ENCODE measurements at regions of chr16 and their contacts with region 1.

Region 1: GRCh38 chr16:53099318-53100130 is 44.7 kb downstream of the CHD9 start:
- DNase-seq: peak; percentile 67
- H3K4me3 Mint-ChIP-seq: peak overlapping the region; percentile 65
- H3K27ac Mint-ChIP-seq: peak overlapping the region; percentile 86
- H3K4me1 Mint-ChIP-seq: peaks cover 33% of the 10 kb centered on the region
- H3K27me3 Mint-ChIP-seq: no peaks in the 10 kb centered on the region

Region 2: DNA sequence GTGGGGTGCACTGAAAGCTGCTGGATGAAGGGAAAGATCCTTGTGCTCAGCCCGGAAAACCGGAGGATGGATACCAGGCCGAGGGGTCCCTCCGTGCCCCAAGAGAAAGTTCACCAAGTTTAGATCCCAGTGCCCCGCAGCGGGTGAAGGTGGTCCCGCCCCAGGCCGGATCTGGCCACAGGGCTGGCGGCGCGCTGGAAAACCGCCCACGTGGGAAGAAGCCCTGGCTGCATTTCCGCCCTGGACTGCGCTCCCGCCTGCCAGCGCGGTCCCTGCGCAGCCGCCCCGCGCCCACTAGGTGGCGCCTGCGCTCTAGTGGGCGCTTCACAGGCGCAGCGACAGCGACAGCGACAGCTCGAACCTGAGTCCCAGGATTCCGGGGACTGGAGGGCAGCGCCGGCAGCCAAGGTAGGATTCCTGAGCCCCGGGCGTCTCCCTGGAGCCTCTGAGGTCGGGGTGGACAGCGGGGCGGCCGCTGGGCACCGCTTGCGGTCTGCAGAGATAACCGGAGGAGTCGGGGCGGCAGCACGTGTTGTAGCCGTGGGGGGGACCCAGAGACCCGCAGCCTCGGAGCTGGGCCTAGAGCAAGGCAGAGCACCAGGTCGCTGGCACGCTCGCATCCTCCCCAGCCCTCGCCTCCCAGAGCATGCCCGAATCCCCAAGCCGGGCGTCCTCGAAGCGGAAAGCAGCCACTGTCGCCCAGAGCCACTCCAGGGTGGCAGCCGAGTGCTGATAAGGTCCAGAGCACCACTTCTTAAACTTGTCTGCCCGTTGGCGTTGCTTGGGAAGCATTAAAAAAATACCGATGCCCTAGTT is 44.6 kb before region 1 on chr16 and contains the start of gene CHD9:
- CTCF ChIA-PET with region 1: interaction called, 15 read pairs
- POLR2A ChIA-PET with region 1: interaction called, 15 read pairs
- DNase-seq: peak; percentile 79
- H3K4me3 Mint-ChIP-seq: peak within 1 kb of the TSS; percentile 77
- H3K27ac Mint-ChIP-seq: peak within 1 kb of the TSS; percentile 71
- H3K4me1 Mint-ChIP-seq: peaks cover 52% of the 10 kb centered on the region
- H3K27me3 Mint-ChIP-seq: no peaks in the 10 kb centered on the region
- total RNA-seq, gene CHD9: 21.6 to 23.8 TPM

Region 3: GRCh38 chr16:53068423-53068833 is 31.1 kb before region 1 on chr16:
- CTCF ChIA-PET with region 1: interaction called, 3 read pairs
- POLR2A ChIA-PET with region 1: interaction called, 13 read pairs
- DNase-seq: peak; percentile 45
- H3K4me3 Mint-ChIP-seq: peak overlapping the region; percentile 19
- H3K27ac Mint-ChIP-seq: peak overlapping the region; percentile 68
- H3K4me1 Mint-ChIP-seq: peaks cover 57% of the 10 kb centered on the region
- H3K27me3 Mint-ChIP-seq: no peaks in the 10 kb centered on the region

Region 4: GRCh38 chr16:53130159-53131049 is 30.9 kb after region 1 on chr16:
- CTCF ChIA-PET with region 1: interaction called, 4 read pairs
- POLR2A ChIA-PET with region 1: interaction called, 20 read pairs
- DNase-seq: peak; percentile 93
- H3K4me3 Mint-ChIP-seq: peak overlapping the region; percentile 77
- H3K27ac Mint-ChIP-seq: peak overlapping the region; percentile 71
- H3K4me1 Mint-ChIP-seq: peaks cover 21% of the 10 kb centered on the region
- H3K27me3 Mint-ChIP-seq: no peaks in the 10 kb centered on the region

Region 5: GRCh38 chr16:53142823-53143568 is 43.5 kb after region 1 on chr16:
- CTCF ChIA-PET with region 1: no interaction called
- POLR2A ChIA-PET with region 1: no interaction called
- DNase-seq: no peak
- H3K4me3 Mint-ChIP-seq: no peak overlapping the region
- H3K27ac Mint-ChIP-seq: no peak overlapping the region
- H3K4me1 Mint-ChIP-seq: no peaks in the 10 kb centered on the region
- H3K27me3 Mint-ChIP-seq: no peaks in the 10 kb centered on the region

Region 6: GRCh38 chr16:53183442-53183841 is 83.9 kb after region 1 on chr16:
- CTCF ChIA-PET with region 1: no interaction called
- POLR2A ChIA-PET with region 1: no interaction called
- DNase-seq: no peak
- H3K4me3 Mint-ChIP-seq: no peak overlapping the region
- H3K27ac Mint-ChIP-seq: no peak overlapping the region
- H3K4me1 Mint-ChIP-seq: no peaks in the 10 kb centered on the region
- H3K27me3 Mint-ChIP-seq: no peaks in the 10 kb centered on the region

Measured in activated CD4-positive, alpha-beta memory T cell treated with anti-CD3 and anti-CD28 coated beads, Interleukin-2, amount 10 ng/mL, durations not matched to agents 7 days and 5 days (primary cell).